ENCODE measurements at regions of chr18 and their contacts with region 1.

Region 1: DNA sequence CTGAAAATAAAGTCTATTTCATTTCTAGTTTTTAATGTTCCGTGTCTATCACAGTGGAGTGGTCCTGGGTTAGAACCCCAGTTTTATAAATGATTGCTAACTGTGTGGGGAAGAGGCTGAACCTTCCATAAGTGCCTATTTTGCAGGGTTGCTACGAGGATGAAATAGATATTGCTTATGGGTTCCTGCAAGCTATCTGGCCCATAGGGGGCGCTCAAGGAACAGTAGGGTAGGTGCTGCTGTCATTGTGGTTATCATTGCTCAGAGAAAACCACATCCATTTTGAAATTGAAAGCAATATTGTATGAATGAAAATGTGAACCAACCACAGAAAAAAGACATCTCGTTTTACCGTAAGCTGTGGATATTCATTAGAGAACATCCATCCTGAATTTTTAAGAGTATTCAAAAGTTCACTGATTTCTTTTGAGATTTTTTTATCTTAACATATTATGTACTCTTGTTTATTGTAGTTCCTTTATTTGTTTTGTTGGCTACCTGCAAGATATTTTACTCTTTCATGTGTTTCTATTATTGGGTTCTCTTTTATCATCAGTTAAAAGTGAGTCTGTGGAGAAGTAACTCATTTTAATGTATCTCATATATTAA is 261.6 kb downstream of the NAPG start:
- DNase-seq: peak; percentile 77
- ATAC-seq: peak; percentile 96
- H3K4me3 ChIP-seq: no peak overlapping the region
- H3K27ac ChIP-seq: no peak overlapping the region
- H3K4me1 ChIP-seq: no peaks in the 10 kb centered on the region; the same call in 1 of the 2 replicates
- H3K27me3 ChIP-seq: no peaks in the 10 kb centered on the region
- CTCF ChIP-seq: peak; percentile 79 to 97 (median 82)
- EP300 ChIP-seq: peak; percentile 48 to 55; a peak in 2 of 4 replicates
- POLR2A ChIP-seq: no peak
- RAD21 ChIP-seq: peak; percentile 88

Region 2: GRCh38 chr18:10759241-10759640 is 28.2 kb before region 1 on chr18:
- CTCF ChIA-PET with region 1: no interaction called
- POLR2A ChIA-PET with region 1: no interaction called
- RAD21 ChIA-PET with region 1: no interaction called
- SMC1A ChIA-PET with region 1: no interaction called
- in situ Hi-C with region 1: no loop called
- intact Hi-C with region 1: no loop called
- DNase-seq: no peak
- ATAC-seq: no peak
- H3K4me3 ChIP-seq: no peak overlapping the region
- H3K27ac ChIP-seq: no peak overlapping the region
- H3K4me1 ChIP-seq: no peaks in the 10 kb centered on the region
- H3K27me3 ChIP-seq: no peaks in the 10 kb centered on the region
- CTCF ChIP-seq: no peak
- EP300 ChIP-seq: no peak
- POLR2A ChIP-seq: no peak
- RAD21 ChIP-seq: no peak

Region 3: GRCh38 chr18:10776493-10776892 is 10.9 kb before region 1 on chr18:
- CTCF ChIA-PET with region 1: interaction called, 9 read pairs
- POLR2A ChIA-PET with region 1: no interaction called
- RAD21 ChIA-PET with region 1: interaction called, 4 read pairs
- SMC1A ChIA-PET with region 1: interaction called, 15 read pairs
- in situ Hi-C with region 1: no loop called
- intact Hi-C with region 1: no loop called
- DNase-seq: no peak
- ATAC-seq: no peak
- H3K4me3 ChIP-seq: no peak overlapping the region
- H3K27ac ChIP-seq: no peak overlapping the region
- H3K4me1 ChIP-seq: no peaks in the 10 kb centered on the region
- H3K27me3 ChIP-seq: no peaks in the 10 kb centered on the region
- CTCF ChIP-seq: no peak
- EP300 ChIP-seq: no peak
- POLR2A ChIP-seq: no peak
- RAD21 ChIP-seq: no peak

Region 4: DNA sequence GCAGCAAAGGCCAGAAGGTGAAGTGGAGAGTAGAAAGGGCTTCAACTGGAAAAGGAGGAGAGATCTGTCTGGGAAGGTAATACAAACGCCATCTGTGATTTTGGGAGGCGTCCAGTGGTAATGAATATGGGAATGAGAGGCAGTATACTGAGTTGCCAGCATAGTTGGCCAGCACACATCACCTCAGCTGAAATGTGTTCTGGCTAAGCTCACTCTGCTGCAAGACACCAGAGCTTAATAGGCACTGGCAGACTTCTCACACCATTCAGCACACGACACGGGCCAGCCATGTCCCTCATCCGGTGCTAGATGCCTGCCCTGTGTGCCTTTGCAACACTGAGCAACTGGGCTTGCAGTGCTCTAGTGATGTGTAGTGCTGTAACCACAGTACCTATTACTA is 84.9 kb after region 1 on chr18:
- CTCF ChIA-PET with region 1: interaction called, 4 read pairs
- POLR2A ChIA-PET with region 1: no interaction called
- RAD21 ChIA-PET with region 1: no interaction called
- SMC1A ChIA-PET with region 1: interaction called, 14 read pairs
- in situ Hi-C with region 1: no loop called
- intact Hi-C with region 1: no loop called
- DNase-seq: no peak
- ATAC-seq: no peak; the same call in 2 of the 3 replicates
- H3K4me3 ChIP-seq: no peak overlapping the region
- H3K27ac ChIP-seq: peak overlapping the region; percentile 28; the same call in 1 of the 2 replicates
- H3K4me1 ChIP-seq: peaks cover 25% of the 10 kb centered on the region
- H3K27me3 ChIP-seq: no peaks in the 10 kb centered on the region
- CTCF ChIP-seq: no peak
- EP300 ChIP-seq: no peak
- POLR2A ChIP-seq: no peak
- RAD21 ChIP-seq: no peak

Region 5: GRCh38 chr18:11155034-11155759 is 367.8 kb after region 1 on chr18:
- CTCF ChIA-PET with region 1: interaction called, 108 read pairs
- POLR2A ChIA-PET with region 1: interaction called, 3 read pairs
- RAD21 ChIA-PET with region 1: interaction called, 45 read pairs
- SMC1A ChIA-PET with region 1: interaction called, 120 read pairs
- in situ Hi-C with region 1: loop called (anchors 5 kb)
- intact Hi-C with region 1: loop called (anchors 1 kb)
- DNase-seq: no peak
- ATAC-seq: no peak
- H3K4me3 ChIP-seq: no peak overlapping the region
- H3K27ac ChIP-seq: no peak overlapping the region
- H3K4me1 ChIP-seq: peaks cover 38% of the 10 kb centered on the region
- H3K27me3 ChIP-seq: no peaks in the 10 kb centered on the region
- CTCF ChIP-seq: no peak
- EP300 ChIP-seq: no peak
- POLR2A ChIP-seq: no peak
- RAD21 ChIP-seq: no peak

Region 6: DNA sequence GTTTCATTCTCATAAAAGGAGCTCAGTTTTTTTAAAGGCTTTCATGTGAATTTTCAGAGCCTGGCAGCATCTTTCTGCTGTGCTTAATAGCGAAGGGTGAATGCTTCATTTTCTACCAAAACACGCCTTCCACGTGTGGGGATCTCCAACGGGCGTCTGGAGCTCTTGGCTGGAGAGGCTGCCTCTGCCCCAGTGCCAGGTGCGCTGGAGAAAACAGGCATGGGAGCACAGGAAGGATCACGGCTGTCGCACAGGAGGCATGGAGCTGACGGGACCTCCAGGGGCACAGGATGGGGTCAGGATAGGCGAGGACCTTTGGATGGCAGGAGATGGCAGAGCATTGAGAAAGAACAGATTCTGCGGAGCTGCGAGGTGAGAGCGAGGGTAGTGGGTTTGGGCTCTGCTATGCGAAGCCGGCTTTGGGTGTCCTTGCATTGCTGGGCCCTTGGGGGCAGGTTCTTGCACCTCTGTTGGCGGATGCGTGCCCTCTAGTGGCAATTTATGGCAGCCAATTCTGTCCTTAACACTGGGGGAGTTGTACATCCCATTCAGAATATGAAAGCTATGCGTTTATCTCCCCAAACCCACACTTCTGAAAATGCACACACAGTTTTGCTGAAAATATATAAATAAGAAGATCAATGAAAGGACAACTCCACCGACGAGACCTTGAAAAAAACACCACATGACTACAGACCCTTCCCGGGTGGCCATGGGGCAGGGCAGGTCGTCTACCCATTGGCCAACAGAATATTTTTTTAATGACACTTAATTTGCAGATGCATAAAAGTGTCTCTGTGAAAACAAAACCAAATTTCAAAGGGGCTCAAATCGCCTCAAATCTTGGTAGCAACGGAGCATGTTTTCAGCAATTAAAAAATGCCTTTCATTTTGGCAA is 731.6 kb after region 1 on chr18:
- CTCF ChIA-PET with region 1: no interaction called
- POLR2A ChIA-PET with region 1: no interaction called
- RAD21 ChIA-PET with region 1: no interaction called
- SMC1A ChIA-PET with region 1: no interaction called
- in situ Hi-C with region 1: loop called (anchors 10 kb)
- intact Hi-C with region 1: no loop called
- DNase-seq: no peak
- ATAC-seq: peak; percentile 100
- H3K4me3 ChIP-seq: no peak overlapping the region
- H3K27ac ChIP-seq: no peak overlapping the region
- H3K4me1 ChIP-seq: no peaks in the 10 kb centered on the region
- H3K27me3 ChIP-seq: peaks cover 0 to 2% of the 10 kb centered on the region in 2 experiments; a peak in 2 of 4 replicates
- CTCF ChIP-seq: peak; percentile 83 to 97 (median 92)
- EP300 ChIP-seq: no peak
- POLR2A ChIP-seq: no peak
- RAD21 ChIP-seq: peak; percentile 83

Measured in GM12878 (cell line).